OCI-LY7 (cell line): ENCODE measurements at regions of chr2 and their contacts with region 1.

Region 1: DNA sequence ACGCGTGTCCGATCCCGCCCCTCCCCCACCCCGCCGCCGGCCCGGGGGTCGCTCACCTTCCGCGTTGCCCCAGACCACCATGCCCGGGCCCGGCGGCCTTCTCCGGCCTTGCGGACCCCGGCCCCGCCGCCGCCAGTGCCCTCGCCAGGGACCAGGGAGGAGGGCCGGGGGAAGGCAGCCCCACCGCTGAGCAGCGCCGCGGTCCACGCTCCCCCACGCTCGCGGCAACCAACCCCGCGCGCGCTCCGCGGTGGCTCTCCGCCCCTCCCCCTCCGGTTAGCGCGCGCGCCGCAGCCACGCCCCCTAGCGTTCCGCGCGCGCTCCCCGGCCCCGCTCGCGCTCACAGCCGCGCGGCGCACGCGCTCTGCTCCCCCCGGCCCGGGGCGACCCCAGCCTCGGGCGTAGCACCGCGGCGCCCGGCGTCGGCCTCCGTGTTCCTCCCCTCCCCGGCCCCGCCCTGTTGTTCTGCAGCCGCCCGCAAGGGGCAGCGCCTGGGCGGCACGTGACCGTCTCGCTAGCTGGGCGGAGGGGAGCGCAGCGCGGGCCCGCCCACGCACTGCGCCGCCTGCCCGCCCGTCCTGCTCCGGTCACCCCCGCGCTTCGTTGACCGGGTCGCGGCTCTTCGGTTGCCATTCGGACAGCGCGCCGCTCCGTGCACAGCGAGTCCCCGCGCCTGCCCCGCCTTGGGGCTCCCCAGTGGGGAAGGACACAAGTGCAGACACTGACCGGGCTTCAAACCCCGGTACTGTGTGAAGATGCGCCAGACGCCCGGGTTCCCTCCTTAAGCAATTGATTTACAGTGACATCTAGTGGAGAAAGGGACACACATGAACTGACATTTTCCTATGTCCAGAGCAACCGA is at the start of gene REV1:
- DNase-seq: peak; percentile 96
- H3K4me3 ChIP-seq: peak within 1 kb of the TSS; percentile 78
- H3K27ac ChIP-seq: peak within 1 kb of the TSS; percentile 49
- H3K4me1 ChIP-seq: peaks cover 28% of the 10 kb centered on the region
- CTCF ChIP-seq: peak; percentile 85
- total RNA-seq, gene REV1: 59.4 and 68.1 TPM in 2 replicates

Region 2: DNA sequence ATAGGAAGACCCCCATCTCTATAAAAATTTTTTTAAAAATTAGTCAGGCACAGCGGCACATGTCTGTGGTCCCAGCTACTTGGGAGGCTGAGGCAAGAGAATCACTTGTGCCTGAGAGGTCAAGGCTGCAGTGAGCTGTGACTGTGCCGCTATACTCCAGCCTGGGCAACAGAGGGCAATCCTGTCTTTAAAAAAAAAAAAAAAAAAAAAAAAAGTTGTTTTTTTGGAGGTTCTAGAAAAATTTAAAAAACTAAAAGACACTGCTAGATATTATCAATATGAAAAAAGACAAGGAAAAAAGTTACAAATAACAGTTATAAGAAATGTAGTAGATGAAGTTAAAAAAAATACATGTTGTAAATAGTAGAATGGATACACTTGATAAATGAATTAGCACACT is 404.6 kb before region 1 on chr2:
- CTCF ChIA-PET with region 1: no interaction called
- POLR2A ChIA-PET with region 1: no interaction called
- intact Hi-C with region 1: loop called (anchors 10 kb)
- DNase-seq: peak; percentile 16
- H3K4me3 ChIP-seq: no peak overlapping the region
- H3K27ac ChIP-seq: no peak overlapping the region
- H3K4me1 ChIP-seq: no peaks in the 10 kb centered on the region
- CTCF ChIP-seq: peak; percentile 56

Region 3: GRCh38 chr2:99141110-99142108 is 348.6 kb before region 1 on chr2 and contains the start of gene C2orf15:
- CTCF ChIA-PET with region 1: no interaction called
- POLR2A ChIA-PET with region 1: interaction called, 4 read pairs
- intact Hi-C with region 1: loop called (anchors 1 kb)
- DNase-seq: peak; percentile 91
- H3K4me3 ChIP-seq: peak within 1 kb of the TSS; percentile 71
- H3K27ac ChIP-seq: peak within 1 kb of the TSS; percentile 48
- H3K4me1 ChIP-seq: peaks cover 12% of the 10 kb centered on the region
- CTCF ChIP-seq: no peak
- total RNA-seq, gene C2orf15: 0.25 and 0.31 TPM in 2 replicates

Region 4: DNA sequence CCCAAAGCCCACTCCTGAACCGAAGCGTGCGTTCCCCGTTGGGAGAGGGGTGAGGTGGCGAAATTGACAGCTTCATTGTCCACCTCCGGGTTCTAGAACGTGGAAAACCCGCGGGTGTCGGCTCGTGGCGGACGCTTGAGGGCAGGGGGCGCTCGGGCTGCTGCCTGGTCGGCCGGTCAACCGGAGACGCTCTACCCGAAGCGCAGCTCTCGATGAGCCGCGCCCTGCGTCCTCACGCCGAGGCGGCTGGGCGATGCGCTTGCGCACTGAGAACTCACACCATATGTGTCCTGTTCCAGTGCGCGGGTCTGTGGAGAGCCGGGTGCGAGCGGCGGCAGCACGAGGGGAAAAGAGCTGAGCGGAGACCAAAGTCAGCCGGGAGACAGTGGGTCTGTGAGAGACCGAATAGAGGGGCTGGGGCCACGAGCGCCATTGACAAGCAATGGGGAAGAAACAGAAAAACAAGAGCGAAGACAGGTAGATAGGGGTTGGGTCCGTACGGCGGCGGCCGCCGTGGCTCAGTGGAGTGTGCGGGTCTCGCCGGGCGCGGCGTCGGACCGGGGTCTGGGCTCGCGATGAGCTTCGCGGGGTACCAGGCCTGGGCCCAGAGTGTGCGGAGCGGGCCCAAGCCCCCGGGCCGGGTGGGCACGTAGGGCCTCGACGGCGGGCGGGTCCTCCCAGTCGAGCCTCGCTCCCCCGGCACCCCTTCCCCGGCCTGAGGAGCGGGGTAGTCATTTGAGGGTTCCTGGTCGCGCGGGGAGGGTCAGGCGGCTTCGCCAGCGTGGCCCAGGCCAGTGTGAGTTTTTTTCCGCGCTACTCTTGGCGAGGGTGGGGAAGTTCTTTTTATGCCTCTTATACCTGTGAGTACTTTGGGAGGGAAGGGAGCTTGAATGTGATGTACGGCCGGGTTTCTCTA is 152.6 kb before region 1 on chr2 and contains the start of gene EIF5B:
- CTCF ChIA-PET with region 1: no interaction called
- POLR2A ChIA-PET with region 1: interaction called, 3 read pairs
- intact Hi-C with region 1: loop called (anchors 1 kb)
- DNase-seq: peak; percentile 98
- H3K4me3 ChIP-seq: peak within 1 kb of the TSS; percentile 86
- H3K27ac ChIP-seq: peak within 1 kb of the TSS; percentile 83
- H3K4me1 ChIP-seq: peaks cover 33% of the 10 kb centered on the region
- CTCF ChIP-seq: peak; percentile 87
- total RNA-seq, gene EIF5B: 19.9 and 28.7 TPM in 2 replicates